ENCODE measurements at regions of chr14 and their contacts with region 1.

Region 1: GRCh38 chr14:50532502-50533240 is at the start of gene MAP4K5:
- DNase-seq: peak; percentile 73 to 95 (median 88)
- ATAC-seq: peak; percentile 93
- H3K4me3 ChIP-seq: peak within 1 kb of the TSS; percentile 45 to 88
- H3K4me3 Mint-ChIP-seq: peak within 1 kb of the TSS; percentile 89
- H3K27ac ChIP-seq: peak within 1 kb of the TSS; percentile 47 to 70
- H3K27ac Mint-ChIP-seq: peak within 1 kb of the TSS; percentile 92
- H3K4me1 ChIP-seq: peaks cover 42% of the 10 kb centered on the region
- H3K4me1 Mint-ChIP-seq: peaks cover 49% of the 10 kb centered on the region
- H3K27me3 ChIP-seq: no peaks in the 10 kb centered on the region
- H3K27me3 Mint-ChIP-seq: no peaks in the 10 kb centered on the region
- CTCF ChIP-seq: peak; percentile 69
- total RNA-seq, gene MAP4K5: 32.0 to 32.7 TPM

Region 2: GRCh38 chr14:50342221-50343078 is 190.2 kb before region 1 on chr14:
- CTCF ChIA-PET with region 1: interaction called, 3 read pairs
- POLR2A ChIA-PET with region 1: no interaction called
- intact Hi-C with region 1: loop called in 1 of 2 experiments (anchors 1 kb)
- DNase-seq: peak in 7 of 9 experiments; percentile 5 to 73 (median 54)
- ATAC-seq: peak; percentile 68
- H3K4me3 ChIP-seq: no peak overlapping the region
- H3K4me3 Mint-ChIP-seq: no peak overlapping the region
- H3K27ac ChIP-seq: no peak overlapping the region
- H3K27ac Mint-ChIP-seq: no peak overlapping the region
- H3K4me1 ChIP-seq: no peaks in the 10 kb centered on the region
- H3K4me1 Mint-ChIP-seq: peaks cover 11% of the 10 kb centered on the region
- H3K27me3 ChIP-seq: no peaks in the 10 kb centered on the region
- H3K27me3 Mint-ChIP-seq: no peaks in the 10 kb centered on the region
- CTCF ChIP-seq: no peak

Region 3: DNA sequence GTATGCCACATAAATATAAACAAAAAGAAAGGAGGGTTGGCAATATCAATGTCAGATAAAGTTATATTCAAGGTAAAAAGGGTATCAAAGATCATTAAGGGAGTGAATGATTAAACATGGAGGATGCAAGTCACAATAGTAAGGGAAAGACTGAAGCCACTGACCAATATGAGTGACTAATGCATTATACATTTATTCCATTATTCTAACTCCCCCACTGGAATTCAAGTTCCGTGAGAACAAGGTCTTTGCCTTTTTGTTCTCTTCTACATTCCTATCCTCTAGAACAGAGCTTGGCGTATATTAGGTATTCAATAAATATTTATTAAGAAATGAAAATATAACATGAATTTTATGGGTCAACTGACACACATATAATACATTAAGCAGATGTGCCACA is 31.0 kb before region 1 on chr14:
- CTCF ChIA-PET with region 1: no interaction called
- POLR2A ChIA-PET with region 1: no interaction called
- intact Hi-C with region 1: no loop called
- DNase-seq: no peak
- ATAC-seq: no peak
- H3K4me3 ChIP-seq: no peak overlapping the region
- H3K4me3 Mint-ChIP-seq: no peak overlapping the region
- H3K27ac ChIP-seq: no peak overlapping the region
- H3K27ac Mint-ChIP-seq: no peak overlapping the region
- H3K4me1 ChIP-seq: no peaks in the 10 kb centered on the region
- H3K4me1 Mint-ChIP-seq: peaks cover 8% of the 10 kb centered on the region
- H3K27me3 ChIP-seq: no peaks in the 10 kb centered on the region
- H3K27me3 Mint-ChIP-seq: no peaks in the 10 kb centered on the region
- CTCF ChIP-seq: no peak

Region 4: DNA sequence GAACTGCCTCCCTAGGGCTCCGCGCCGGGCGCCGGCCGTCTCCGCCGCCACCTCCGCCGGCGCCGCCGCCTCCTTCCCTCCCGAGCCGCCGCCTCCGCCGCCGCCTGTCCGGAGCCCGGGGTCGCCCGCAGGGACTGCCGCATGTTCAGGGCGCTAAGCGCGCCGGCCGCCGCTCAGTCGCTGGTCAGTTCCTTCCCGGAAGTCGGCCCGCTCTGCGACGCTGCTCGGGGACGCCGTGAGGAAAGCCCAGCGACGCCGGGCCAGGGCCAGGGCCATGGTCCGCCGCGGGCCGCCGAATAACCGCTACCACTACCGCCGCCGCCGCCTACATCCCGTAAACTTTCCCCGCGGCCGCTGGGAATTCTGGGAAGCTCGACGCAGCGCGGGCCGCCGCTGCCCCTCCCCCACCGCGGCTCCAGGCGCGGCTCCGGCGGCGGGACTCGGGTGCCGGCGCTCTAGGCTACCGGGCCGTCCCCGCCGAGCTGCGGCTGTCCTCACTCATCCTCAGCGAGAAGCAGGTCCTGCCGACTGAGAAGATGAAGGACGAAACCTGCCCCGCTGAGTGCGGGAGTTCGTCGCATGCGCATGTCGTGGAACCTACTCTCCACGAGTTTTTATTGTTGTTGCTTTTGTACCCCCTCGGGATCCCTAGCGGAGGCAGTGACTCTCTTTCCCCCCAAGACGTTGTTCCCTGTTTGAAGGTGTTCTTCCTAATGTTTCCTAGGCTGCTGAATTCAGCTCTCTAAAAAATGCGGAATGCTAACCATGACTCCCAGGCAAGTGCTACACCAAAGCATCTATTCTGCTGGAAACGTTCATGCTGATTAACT is 135.5 kb after region 1 on chr14 and contains the start of gene SAV1:
- CTCF ChIA-PET with region 1: no interaction called
- POLR2A ChIA-PET with region 1: no interaction called
- intact Hi-C with region 1: no loop called
- DNase-seq: peak; percentile 13 to 71 (median 42)
- ATAC-seq: peak; percentile 38
- H3K4me3 ChIP-seq: peak within 1 kb of the TSS; percentile 55 to 60
- H3K4me3 Mint-ChIP-seq: no peak within 1 kb of the TSS
- H3K27ac ChIP-seq: peak within 1 kb of the TSS in 1 of 2 experiments; percentile 52
- H3K27ac Mint-ChIP-seq: peak within 1 kb of the TSS; percentile 84
- H3K4me1 ChIP-seq: peaks cover 16% of the 10 kb centered on the region
- H3K4me1 Mint-ChIP-seq: peaks cover 20% of the 10 kb centered on the region
- H3K27me3 ChIP-seq: no peaks in the 10 kb centered on the region
- H3K27me3 Mint-ChIP-seq: no peaks in the 10 kb centered on the region
- CTCF ChIP-seq: no peak
- total RNA-seq, gene SAV1: 13.1 to 13.4 TPM

Region 5: DNA sequence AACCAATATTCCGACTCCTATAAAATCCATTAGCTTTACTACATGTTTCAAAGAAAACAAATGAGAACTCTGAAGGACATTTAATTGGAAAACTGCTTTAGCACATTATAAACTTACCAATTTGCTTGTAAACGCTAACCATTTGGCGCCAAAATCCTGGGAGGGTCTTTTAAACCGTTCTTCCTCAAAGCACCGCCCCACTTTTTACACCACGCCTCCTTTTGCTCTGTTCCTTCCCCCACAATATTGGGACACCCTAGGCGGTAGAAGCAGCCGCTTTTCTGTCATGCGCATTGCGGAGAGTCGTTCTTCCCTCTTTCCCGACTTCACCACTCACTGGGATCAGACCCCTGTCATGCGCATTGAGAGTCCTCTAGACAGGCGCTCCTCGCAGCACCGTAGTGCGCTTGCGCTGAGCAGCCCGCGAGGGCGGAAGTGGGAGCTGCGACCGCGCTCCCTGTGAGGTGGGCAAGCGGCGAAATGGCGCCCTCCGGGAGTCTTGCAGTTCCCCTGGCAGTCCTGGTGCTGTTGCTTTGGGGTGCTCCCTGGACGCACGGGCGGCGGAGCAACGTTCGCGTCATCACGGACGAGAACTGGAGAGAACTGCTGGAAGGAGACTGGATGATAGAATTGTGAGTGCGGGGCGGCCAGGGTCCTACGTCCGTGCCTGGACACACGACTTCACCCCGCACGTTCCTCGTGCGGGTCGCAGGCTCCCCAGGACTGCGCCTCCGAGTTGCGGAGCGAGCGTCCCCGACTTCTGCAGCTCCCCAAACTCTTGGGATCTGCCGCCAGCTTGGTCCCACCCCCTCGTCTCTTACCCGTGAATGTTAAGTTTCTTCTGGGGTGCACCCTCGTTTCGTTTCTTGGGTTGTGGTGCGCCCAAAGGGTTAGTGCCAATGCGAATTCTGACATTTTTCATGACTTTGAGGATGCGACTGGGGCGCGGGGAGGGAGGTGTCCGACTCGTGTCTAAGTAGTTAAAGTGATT is 707.4 kb after region 1 on chr14 and contains the start of gene TMX1:
- CTCF ChIA-PET with region 1: no interaction called
- POLR2A ChIA-PET with region 1: no interaction called
- intact Hi-C with region 1: loop called in 1 of 2 experiments (anchors 10 kb)
- DNase-seq: peak; percentile 58 to 94 (median 85)
- ATAC-seq: peak; percentile 93
- H3K4me3 ChIP-seq: peak within 1 kb of the TSS; percentile 76 to 95
- H3K4me3 Mint-ChIP-seq: no peak within 1 kb of the TSS
- H3K27ac ChIP-seq: peak within 1 kb of the TSS; percentile 57 to 77
- H3K27ac Mint-ChIP-seq: no peak within 1 kb of the TSS
- H3K4me1 ChIP-seq: peaks cover 30% of the 10 kb centered on the region
- H3K4me1 Mint-ChIP-seq: peaks cover 24% of the 10 kb centered on the region
- H3K27me3 ChIP-seq: no peaks in the 10 kb centered on the region
- H3K27me3 Mint-ChIP-seq: no peaks in the 10 kb centered on the region
- CTCF ChIP-seq: no peak
- total RNA-seq, gene TMX1: 10.2 to 11.1 TPM

Measured in CD8-positive, alpha-beta T cell (primary cell).